RWPE1 (cell line): ENCODE measurements at regions of chr17 and their contacts with region 1.

Region 1: DNA sequence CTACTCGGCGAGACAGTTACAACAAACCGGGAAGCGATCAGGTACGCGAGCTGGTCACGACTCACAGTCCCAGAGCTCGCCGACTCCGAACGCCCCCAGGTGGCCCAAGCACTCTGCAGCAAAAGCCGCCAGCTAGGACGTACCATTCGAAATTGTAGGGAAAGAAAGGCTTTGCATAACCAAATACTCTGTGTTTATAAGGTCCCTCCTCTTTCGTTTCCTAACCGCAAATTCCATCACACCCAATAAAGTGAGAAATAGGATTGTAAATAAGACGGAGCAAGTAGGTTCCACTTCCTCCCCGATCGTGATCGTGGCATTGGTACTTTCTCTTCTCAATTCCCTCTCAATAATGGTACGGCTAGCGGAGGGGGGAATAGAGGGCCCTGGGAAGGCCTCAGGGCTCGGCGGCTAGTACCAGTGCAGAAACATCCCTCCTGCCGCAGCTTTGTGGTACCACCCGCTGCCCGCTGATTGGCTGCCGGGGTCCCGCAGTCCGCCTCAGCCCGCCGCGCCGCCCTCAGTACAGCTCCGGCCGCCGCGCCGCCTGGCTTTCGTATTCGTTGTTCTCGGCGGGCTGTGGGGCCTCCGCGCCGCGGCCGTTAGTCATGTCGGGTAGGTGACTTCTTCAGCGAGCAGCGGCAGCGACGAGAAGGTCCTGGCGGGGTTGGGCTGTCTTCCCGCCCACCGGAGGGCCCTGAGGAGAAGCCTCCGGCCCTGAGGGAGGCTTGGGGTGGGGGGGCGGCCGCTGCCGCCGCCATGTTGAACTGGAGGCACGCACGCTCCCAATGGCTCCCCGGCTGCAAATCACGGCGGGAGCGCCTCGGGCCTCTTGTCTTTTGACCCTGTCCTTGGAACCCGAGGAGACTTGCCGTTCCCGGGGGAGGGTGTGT is at the start of gene TAF15:
- DNase-seq: peak; percentile 96
- H3K27ac ChIP-seq: peak within 1 kb of the TSS; percentile 93
- CTCF ChIP-seq: peak; percentile 88

Region 2: GRCh38 chr17:35726127-35726952 is 82.9 kb before region 1 on chr17:
- CTCF ChIA-PET with region 1: no interaction called
- POLR2A ChIA-PET with region 1: no interaction called
- DNase-seq: peak; percentile 71
- H3K27ac ChIP-seq: peak overlapping the region; percentile 50
- CTCF ChIP-seq: no peak

Region 3: GRCh38 chr17:35794988-35795824 is 14.0 kb before region 1 on chr17 and contains the start of gene MMP28:
- CTCF ChIA-PET with region 1: interaction called, 11 read pairs
- POLR2A ChIA-PET with region 1: no interaction called
- DNase-seq: peak; percentile 76
- H3K27ac ChIP-seq: peak within 1 kb of the TSS; percentile 94
- CTCF ChIP-seq: no peak